Heart right ventricle (tissue), 16 donors: ENCODE measurements at regions of chr1 and their contacts with region 1.

Region 1: DNA sequence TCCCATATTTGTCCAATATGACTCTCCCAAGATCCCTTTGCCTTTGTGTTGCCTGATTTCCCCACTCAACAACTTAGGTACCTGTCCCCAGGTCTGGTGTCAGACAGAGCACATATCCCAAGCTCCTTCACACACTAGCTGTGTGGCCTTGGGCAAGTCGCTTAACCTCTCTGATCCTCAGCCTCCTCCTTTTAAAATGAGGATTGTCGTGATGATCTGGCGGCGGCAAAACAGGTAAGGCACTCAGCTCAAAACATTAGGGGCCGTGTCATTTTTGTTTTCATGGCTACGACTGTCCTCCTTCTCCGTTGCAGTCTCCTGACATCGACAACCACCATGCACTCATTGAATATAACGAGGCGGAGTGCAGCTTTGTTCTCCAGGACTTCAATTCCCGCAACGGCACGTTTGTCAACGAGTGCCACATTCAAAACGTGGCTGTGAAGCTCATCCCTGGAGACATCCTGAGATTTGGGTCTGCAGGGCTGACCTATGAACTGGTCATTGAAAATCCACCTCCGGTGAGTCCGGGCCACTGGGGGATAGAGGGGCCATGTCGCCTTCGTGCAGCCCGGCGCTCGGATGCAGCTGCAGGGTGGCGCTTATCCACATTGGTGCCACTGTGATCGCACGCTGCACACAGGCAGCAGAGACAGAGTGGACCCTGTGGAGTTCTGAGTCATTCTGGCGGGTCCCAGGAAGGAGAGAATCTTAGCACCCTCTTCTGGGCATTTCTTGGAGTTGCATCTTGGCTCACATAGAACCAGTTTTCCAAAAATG is 25.2 kb downstream of the FHAD1 start:
- DNase-seq: peak in 1 of 2 donors; percentile 46
- ATAC-seq: peak; percentile 86 to 95 (median 88)
- H3K4me3 ChIP-seq: no peak overlapping the region
- H3K27ac ChIP-seq: no peak overlapping the region
- H3K4me1 ChIP-seq: peaks cover 0 to 20% (median 7%) of the 10 kb centered on the region in 9 donors
- H3K27me3 ChIP-seq: peaks cover 0 to 12% (median 3%) of the 10 kb centered on the region in 7 donors
- CTCF ChIP-seq: peak; percentile 56 to 86 (median 79)

Region 2: GRCh38 chr1:15056515-15057285 is 215.5 kb before region 1 on chr1:
- intact Hi-C with region 1: no loop called
- DNase-seq: no peak
- ATAC-seq: peak in 2 of 8 donors; percentile 24 to 60
- H3K4me3 ChIP-seq: no peak overlapping the region
- H3K27ac ChIP-seq: no peak overlapping the region
- H3K4me1 ChIP-seq: no peaks in the 10 kb centered on the region
- H3K27me3 ChIP-seq: no peaks in the 10 kb centered on the region
- CTCF ChIP-seq: no peak

Region 3: DNA sequence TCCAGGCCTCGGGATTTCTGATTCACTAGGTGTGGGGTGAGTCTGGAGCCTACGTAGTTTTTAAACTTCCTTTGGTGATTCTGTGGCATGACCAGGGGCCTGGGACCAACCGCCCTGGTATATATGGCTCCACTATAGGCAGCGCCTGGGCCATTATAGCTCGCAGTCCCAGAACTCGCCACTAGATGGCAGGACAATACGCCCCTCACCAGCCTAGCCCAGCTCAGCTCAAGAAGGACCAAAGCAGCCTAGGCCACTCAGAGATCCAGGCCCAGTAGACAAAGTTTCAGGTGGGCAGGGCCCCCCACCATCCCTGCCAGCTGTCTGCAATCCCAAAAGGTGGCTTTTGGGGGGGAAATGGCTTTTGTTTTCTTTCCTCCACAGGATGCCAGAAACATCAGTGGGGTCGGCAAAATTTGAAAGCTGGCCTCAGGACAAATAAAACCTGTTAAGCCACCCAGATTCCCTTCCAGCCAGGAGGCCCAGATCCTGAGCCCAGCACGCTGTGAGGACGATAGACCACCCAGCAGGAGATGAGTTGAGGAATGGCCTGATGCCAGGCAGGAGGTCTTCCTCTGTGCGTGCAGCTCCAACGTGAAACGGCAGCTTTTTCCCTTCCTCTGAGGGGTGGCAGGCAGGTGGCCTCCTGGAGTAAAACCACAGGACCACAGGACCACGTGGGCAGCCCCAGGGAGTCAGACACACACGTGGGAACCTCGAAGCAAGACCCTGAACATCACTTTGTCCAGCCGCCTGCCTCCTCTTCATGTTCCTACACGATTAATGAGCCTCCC is 143.5 kb before region 1 on chr1:
- intact Hi-C with region 1: loop called (anchors 1 to 5 kb)
- DNase-seq: peak; percentile 59 to 67
- ATAC-seq: peak; percentile 83 to 94 (median 90)
- H3K4me3 ChIP-seq: no peak overlapping the region
- H3K27ac ChIP-seq: no peak overlapping the region
- H3K4me1 ChIP-seq: no peaks in the 10 kb centered on the region
- H3K27me3 ChIP-seq: peaks cover 0 to 4% (median 0%) of the 10 kb centered on the region in 7 donors
- CTCF ChIP-seq: peak; percentile 82 to 91 (median 87)

Region 4: DNA sequence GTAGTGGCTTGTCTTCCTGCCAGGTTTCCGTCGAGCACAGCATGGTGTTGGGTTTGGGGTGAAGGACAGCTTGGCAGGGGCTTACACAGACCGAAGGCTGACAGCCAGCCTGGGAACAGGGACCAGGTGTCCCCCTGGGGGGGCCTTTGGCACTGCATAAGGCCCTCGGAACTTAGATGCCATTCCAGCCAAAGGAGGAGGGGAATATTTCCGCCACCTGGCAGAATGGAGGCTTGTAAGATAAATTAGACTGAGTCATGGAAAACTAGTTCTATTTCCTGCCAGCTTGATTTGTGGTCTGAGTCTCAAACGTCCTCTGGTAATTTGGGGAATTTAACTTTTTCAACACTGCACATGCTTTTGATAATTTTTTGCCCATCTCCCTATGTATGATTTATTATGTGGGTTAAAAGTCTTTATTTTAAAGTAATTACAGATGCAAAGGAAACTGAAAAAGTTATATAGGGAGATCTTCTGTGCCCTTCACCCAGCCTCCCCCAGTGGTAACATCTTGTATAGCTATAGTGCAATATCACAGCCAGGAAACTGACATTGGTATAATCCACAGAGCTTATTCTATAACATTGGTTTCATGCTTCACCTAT is 130.2 kb before region 1 on chr1:
- intact Hi-C with region 1: loop called in 1 of 10 experiments (anchors 5 kb)
- DNase-seq: peak; percentile 33 to 54
- ATAC-seq: peak; percentile 57 to 92 (median 88)
- H3K4me3 ChIP-seq: no peak overlapping the region
- H3K27ac ChIP-seq: peak overlapping the region in 2 of 10 donors; percentile 31 to 43
- H3K4me1 ChIP-seq: peaks cover 0 to 20% (median 0%) of the 10 kb centered on the region in 9 donors
- H3K27me3 ChIP-seq: peaks cover 0 to 15% (median 0%) of the 10 kb centered on the region in 7 donors
- CTCF ChIP-seq: no peak

Region 5: GRCh38 chr1:15152318-15153183 is 119.6 kb before region 1 on chr1:
- intact Hi-C with region 1: loop called (anchors 1 to 5 kb)
- DNase-seq: peak; percentile 76 to 83
- ATAC-seq: peak; percentile 56 to 84 (median 76)
- H3K4me3 ChIP-seq: peak overlapping the region; percentile 61 to 91 (median 66)
- H3K27ac ChIP-seq: peak overlapping the region; percentile 50 to 88 (median 80)
- H3K4me1 ChIP-seq: peaks cover 2 to 50% (median 20%) of the 10 kb centered on the region in 9 donors
- H3K27me3 ChIP-seq: peaks cover 0 to 35% (median 0%) of the 10 kb centered on the region in 7 donors
- CTCF ChIP-seq: peak; percentile 46 to 84 (median 66)

Region 6: GRCh38 chr1:15220825-15221431 is 51.3 kb before region 1 on chr1:
- intact Hi-C with region 1: no loop called
- DNase-seq: no peak
- ATAC-seq: peak in 2 of 8 donors; percentile 18
- H3K4me3 ChIP-seq: no peak overlapping the region
- H3K27ac ChIP-seq: peak overlapping the region in 1 of 10 donors; percentile 26
- H3K4me1 ChIP-seq: peaks cover 0 to 28% (median 12%) of the 10 kb centered on the region in 9 donors
- H3K27me3 ChIP-seq: no peaks in the 10 kb centered on the region
- CTCF ChIP-seq: no peak

Region 7: GRCh38 chr1:15364740-15365139 is 92.5 kb after region 1 on chr1:
- intact Hi-C with region 1: no loop called
- DNase-seq: no peak
- ATAC-seq: no peak
- H3K4me3 ChIP-seq: no peak overlapping the region
- H3K27ac ChIP-seq: no peak overlapping the region
- H3K4me1 ChIP-seq: no peaks in the 10 kb centered on the region
- H3K27me3 ChIP-seq: no peaks in the 10 kb centered on the region
- CTCF ChIP-seq: peak in 1 of 9 donors; percentile 7